Naive thymus-derived CD8-positive, alpha-beta T cell (primary cell): ENCODE measurements at regions of chr6 and their contacts with region 1.

Region 1: DNA sequence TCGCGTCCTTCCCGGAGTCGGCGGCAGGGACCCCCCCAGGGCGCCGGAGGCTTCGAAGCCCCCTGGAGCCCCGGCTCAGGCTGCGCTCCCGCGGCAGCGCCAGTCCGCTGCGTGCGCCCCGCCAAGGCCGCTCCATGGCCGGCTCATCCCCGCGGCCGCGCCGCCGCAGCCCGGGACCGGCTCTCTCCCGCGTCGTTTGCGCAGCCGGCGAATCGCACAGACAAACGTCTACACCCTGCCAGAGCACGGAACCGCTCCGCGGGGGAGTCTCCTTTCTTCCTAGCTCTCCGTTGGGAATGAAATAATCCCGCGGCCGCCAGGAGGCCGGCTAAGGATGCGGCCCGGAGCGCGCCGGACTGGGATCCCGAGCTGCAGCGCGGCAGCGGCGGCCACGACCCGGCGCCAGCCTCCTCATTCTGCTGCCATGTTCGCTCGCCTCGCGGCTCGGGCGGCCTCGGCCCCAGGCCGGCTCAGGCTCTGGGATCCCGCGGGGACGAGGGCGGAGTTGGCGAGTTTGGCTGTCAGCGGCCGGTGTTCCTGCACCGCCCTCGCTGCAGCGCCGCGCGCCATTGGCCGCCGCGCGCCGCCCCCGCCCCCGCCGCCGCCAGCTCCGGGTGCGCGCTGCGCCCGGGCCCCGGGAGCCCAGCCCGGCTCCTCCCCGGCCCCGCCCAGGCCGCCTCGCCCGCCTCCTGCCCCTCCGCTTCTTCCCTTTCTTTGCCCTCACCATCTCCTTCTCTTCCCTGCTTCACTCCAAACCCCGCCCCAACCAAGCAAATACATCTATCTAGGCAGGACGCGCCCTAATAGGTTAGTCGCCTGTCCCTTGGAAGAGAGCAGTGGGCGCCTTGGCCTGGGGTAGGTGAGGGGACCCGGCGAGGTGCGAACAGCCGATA is at the start of gene GFOD1:
- DNase-seq: peak; percentile 36 to 80 (median 58)
- ATAC-seq: peak; percentile 79 to 87
- H3K4me3 Mint-ChIP-seq: peak within 1 kb of the TSS; percentile 84 to 97 (median 90)
- H3K27ac Mint-ChIP-seq: peak within 1 kb of the TSS in 8 of 10 donors; percentile 47 to 86 (median 68)
- H3K4me1 Mint-ChIP-seq: peaks cover 14 to 31% (median 30%) of the 10 kb centered on the region in 4 donors
- H3K27me3 Mint-ChIP-seq: peaks cover 0 to 16% (median 9%) of the 10 kb centered on the region in 5 donors
- polyA plus RNA-seq, gene GFOD1: 0.08 to 1.2 (median 0.88) TPM

Region 2: GRCh38 chr6:13428583-13429405 is 58.6 kb before region 1 on chr6:
- POLR2A ChIA-PET with region 1: no interaction called
- DNase-seq: no peak
- ATAC-seq: no peak
- H3K4me3 Mint-ChIP-seq: peak overlapping the region; percentile 69 to 83 (median 78)
- H3K27ac Mint-ChIP-seq: peak overlapping the region in 8 of 10 donors; percentile 6 to 91 (median 47)
- H3K4me1 Mint-ChIP-seq: peaks cover 24 to 78% (median 48%) of the 10 kb centered on the region in 4 donors
- H3K27me3 Mint-ChIP-seq: peaks cover 0 to 3% (median 0%) of the 10 kb centered on the region in 5 donors

Region 3: GRCh38 chr6:13526727-13527670 is 39.6 kb after region 1 on chr6:
- POLR2A ChIA-PET with region 1: interaction called, 17 read pairs
- DNase-seq: peak; percentile 29 to 85 (median 56)
- ATAC-seq: peak; percentile 97 to 99
- H3K4me3 Mint-ChIP-seq: peak overlapping the region; percentile 3 to 75 (median 56)
- H3K27ac Mint-ChIP-seq: peak overlapping the region; percentile 0 to 94 (median 79)
- H3K4me1 Mint-ChIP-seq: peaks cover 5 to 41% (median 25%) of the 10 kb centered on the region in 4 donors
- H3K27me3 Mint-ChIP-seq: no peaks in the 10 kb centered on the region

Region 4: DNA sequence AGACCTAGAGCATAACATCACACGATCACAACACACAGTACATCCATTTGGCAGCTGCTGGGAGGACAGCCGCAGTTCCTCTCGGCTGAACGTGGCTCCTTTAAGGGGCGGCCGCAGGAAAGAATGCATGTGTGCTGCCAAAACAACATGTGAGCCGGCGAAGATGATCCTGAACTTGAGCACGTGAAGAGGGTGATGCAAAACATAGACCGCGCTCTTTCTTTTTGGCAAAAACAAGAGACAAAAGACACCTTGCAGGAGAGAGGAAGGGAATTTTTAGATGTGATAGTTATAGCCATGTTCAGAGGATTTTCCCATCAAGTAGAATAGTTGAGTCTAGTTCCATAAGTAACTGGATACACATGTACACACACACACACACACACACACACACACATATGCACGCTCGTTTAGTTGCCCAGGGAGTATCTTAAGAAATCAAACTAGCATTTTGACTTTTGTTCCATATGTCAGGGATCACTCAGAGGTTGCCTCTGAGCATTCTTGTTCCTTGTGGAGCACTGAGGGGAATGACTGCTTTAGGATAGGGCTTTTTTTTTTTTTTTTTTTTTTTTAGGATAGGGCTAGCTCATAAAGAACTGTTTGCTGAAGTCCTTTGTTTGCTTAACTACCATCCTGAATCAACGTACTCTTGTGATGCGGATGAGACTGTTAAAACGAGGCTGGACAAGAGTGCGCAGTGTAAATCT is 246.0 kb after region 1 on chr6:
- POLR2A ChIA-PET with region 1: no interaction called
- DNase-seq: no peak
- ATAC-seq: no peak
- H3K4me3 Mint-ChIP-seq: no peak overlapping the region
- H3K27ac Mint-ChIP-seq: peak overlapping the region in 1 of 10 donors; percentile 34
- H3K4me1 Mint-ChIP-seq: peaks cover 0 to 2% (median 0%) of the 10 kb centered on the region in 4 donors
- H3K27me3 Mint-ChIP-seq: peaks cover 0 to 6% (median 0%) of the 10 kb centered on the region in 5 donors